Adrenal gland (tissue), 19 donors: ENCODE measurements at regions of chr7 and their contacts with region 1.

Region 1: DNA sequence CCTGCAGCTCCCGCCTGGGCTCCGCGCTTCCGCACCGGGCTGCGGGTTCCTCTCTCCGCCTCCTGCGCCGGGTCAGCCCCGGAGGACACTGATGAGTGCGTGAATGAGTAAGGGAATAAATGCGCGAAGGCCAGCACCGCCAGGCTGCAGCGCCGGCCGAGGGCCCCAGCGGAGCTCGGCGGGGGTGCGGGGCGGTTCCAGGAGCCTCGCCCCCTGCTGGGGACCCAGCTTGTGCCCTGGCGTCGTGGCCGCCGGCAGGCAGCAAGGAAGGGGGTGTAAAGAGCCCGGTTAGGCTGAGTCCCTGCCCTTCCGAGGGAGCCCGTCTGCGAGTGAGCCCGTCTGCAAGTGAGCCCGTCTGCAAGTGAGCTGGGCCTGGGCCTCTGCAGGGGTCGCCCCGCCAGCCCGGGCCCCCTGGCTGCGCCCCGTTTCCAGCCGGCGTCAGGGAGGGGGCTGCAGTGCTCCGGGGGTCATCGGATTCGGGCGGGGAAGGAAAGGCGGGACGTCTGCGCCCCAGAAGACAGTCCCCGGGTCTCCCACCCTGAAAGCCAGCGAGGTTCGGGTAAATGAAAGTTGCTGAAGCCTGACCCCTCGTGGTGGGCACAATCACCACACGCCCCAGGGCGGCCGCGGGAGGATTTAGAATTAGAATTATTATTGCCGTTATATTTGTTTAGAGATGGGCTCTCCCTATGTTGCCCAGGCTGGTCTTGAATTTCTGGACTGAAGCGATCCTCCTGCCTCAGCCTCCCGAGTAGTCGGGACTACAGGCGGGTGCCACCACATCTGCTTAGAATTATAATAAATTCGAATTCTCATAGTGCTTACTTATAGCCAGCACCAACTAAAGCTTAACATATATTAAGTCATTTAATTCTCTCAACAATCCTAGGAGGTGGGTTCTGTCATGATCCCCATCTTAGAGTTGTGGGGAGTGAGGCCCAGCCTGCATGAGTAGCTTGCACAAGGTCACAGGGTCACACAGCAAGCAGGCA is 8.6 kb upstream of the CRYGN start:
- DNase-seq: peak; percentile 74 to 87 (median 78)
- H3K4me3 ChIP-seq: peak overlapping the region in 3 of 4 donors; percentile 44 to 62 (median 54)
- H3K27ac ChIP-seq: peak overlapping the region in 4 of 5 donors; percentile 59 to 79 (median 65)
- H3K4me1 ChIP-seq: peaks cover 0 to 4% of the 10 kb centered on the region in 2 donors
- H3K27me3 ChIP-seq: no peaks in the 10 kb centered on the region
- CTCF ChIP-seq: peak; percentile 67 to 88 (median 76)
- POLR2A ChIP-seq: peak; percentile 9 to 57

Region 2: GRCh38 chr7:151368136-151368571 is 80.4 kb before region 1 on chr7:
- intact Hi-C with region 1: loop called (anchors 5 kb)
- DNase-seq: peak; percentile 85 to 94 (median 90)
- H3K4me3 ChIP-seq: no peak overlapping the region
- H3K27ac ChIP-seq: peak overlapping the region in 2 of 5 donors; percentile 37 to 57
- H3K4me1 ChIP-seq: peaks cover 0 to 6% of the 10 kb centered on the region in 2 donors
- H3K27me3 ChIP-seq: no peaks in the 10 kb centered on the region
- CTCF ChIP-seq: peak; percentile 87 to 97 (median 93)
- POLR2A ChIP-seq: no peak